MCF 10A (cell line): ENCODE measurements at regions of chr1 and their contacts with region 1.

Region 1: DNA sequence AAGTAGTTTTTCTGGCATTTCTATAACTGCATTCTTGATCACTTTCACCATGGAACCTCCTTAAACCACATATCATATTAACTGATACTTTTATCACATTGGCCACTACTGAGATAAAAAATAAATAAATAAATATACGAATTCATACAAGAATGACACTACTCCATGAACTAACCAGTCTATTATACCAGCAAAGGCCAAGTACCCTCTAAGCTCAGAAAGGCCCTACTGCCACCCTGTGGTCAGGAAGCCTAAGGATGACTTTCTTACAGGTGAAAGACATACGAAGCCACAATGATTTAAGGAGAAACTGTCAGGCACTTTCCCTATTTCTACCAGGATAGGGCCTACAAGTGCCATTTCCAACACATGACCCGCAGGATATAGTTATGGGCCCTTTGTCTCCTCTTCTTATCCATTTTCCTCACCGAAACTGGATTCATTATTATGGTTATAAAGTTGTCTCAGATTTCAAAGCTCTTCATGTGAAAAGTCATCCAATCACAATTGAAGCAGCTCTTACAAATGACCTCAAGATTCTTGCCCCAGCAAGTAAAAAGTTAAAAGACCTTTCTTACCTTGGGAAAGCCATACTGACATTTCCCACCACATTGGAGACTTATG is 23.9 kb downstream of the DNAJC8 start:
- DNase-seq: peak; percentile 78
- H3K4me3 Mint-ChIP-seq: no peak overlapping the region
- H3K27ac Mint-ChIP-seq: no peak overlapping the region
- H3K4me1 Mint-ChIP-seq: peaks cover 9% of the 10 kb centered on the region
- H3K27me3 Mint-ChIP-seq: no peaks in the 10 kb centered on the region
- CTCF ChIP-seq: peak; percentile 80

Region 2: DNA sequence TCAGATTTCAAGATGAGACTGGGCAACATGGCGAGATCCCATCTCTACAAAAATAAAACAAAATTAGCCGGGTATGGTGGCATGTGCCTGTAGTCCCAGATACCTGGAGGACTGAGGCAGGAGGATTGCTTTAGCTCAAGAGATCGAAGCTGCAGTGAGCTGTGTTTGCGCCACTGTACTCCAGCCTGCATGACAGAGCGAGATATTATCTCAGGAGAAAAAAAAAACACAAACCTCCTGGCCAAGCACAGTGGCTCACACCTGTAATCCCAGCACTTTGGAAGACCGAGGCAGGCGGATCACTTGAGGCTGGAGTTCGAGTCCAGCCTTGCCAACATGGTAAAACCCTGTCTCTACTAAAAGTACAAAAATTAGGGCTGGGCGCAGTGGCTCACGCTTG is 206.3 kb before region 1 on chr1:
- CTCF ChIA-PET with region 1: no interaction called
- POLR2A ChIA-PET with region 1: no interaction called
- intact Hi-C with region 1: loop called (anchors 10 kb)
- DNase-seq: no peak
- H3K4me3 Mint-ChIP-seq: no peak overlapping the region
- H3K27ac Mint-ChIP-seq: no peak overlapping the region
- H3K4me1 Mint-ChIP-seq: no peaks in the 10 kb centered on the region
- H3K27me3 Mint-ChIP-seq: no peaks in the 10 kb centered on the region
- CTCF ChIP-seq: no peak

Region 3: GRCh38 chr1:28193701-28194161 is 15.2 kb before region 1 on chr1:
- CTCF ChIA-PET with region 1: interaction called, 23 read pairs
- POLR2A ChIA-PET with region 1: interaction called, 7 read pairs
- intact Hi-C with region 1: no loop called
- DNase-seq: peak; percentile 93
- H3K4me3 Mint-ChIP-seq: peak overlapping the region; percentile 54
- H3K27ac Mint-ChIP-seq: no peak overlapping the region
- H3K4me1 Mint-ChIP-seq: peaks cover 23% of the 10 kb centered on the region
- H3K27me3 Mint-ChIP-seq: no peaks in the 10 kb centered on the region
- CTCF ChIP-seq: no peak